Psoas muscle (tissue), 8 donors: ENCODE measurements at regions of chr12 and their contacts with region 1.

Region 1: GRCh38 chr12:77204091-77204490 is 138.7 kb upstream of the E2F7 start:
- DNase-seq: no peak
- ATAC-seq: no peak
- H3K4me3 ChIP-seq: no peak overlapping the region
- H3K27ac ChIP-seq: no peak overlapping the region
- H3K4me1 ChIP-seq: no peaks in the 10 kb centered on the region
- H3K27me3 ChIP-seq: no peaks in the 10 kb centered on the region
- CTCF ChIP-seq: no peak

Region 2: GRCh38 chr12:77442633-77443032 is 238.5 kb after region 1 on chr12:
- intact Hi-C with region 1: loop called in 1 of 2 experiments (anchors 5 kb)
- DNase-seq: no peak
- ATAC-seq: no peak
- H3K4me3 ChIP-seq: no peak overlapping the region
- H3K27ac ChIP-seq: no peak overlapping the region
- H3K4me1 ChIP-seq: no peaks in the 10 kb centered on the region
- H3K27me3 ChIP-seq: no peaks in the 10 kb centered on the region
- CTCF ChIP-seq: no peak